ENCODE measurements at regions of chr7 and their contacts with region 1.

Region 1: GRCh38 chr7:123485187-123485586 is 49.2 kb downstream of the IQUB start:
- DNase-seq: no peak
- H3K4me3 ChIP-seq: no peak overlapping the region
- H3K27ac ChIP-seq: no peak overlapping the region
- H3K4me1 ChIP-seq: no peaks in the 10 kb centered on the region
- H3K27me3 ChIP-seq: no peaks in the 10 kb centered on the region
- CTCF ChIP-seq: no peak

Region 2: DNA sequence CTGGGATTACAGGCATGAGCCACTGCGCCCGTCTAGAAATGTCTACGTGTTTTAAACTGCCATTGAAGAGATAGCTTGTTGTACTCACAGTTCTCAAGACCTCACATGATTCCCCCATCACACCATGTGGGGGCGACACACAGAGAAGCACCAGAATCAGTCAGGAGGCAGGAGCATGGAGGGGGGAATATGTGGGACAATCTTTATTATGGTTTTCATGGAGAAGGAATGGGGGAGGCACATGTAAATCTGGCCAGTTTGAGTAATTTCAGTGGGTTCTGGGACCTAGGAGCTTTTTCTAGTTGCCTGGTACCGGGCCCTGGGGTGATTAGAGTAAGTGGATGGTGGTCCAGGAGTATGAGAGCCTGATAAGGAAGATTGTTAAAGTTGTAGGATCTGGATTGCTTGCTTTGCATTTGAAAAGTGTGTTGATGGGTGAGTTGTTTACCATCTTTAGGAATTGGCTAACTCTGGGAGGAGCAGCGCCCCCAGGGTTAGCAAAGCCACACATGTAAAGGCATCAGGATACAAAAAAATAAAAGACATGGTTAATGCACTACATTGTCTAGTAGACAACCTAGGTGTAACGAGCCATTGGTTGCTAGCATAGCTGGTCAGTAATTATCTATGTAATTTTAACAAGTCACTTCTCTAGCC is 200.0 kb before region 1 on chr7:
- intact Hi-C with region 1: no loop called
- DNase-seq: no peak
- H3K4me3 ChIP-seq: no peak overlapping the region
- H3K27ac ChIP-seq: no peak overlapping the region
- H3K4me1 ChIP-seq: no peaks in the 10 kb centered on the region
- H3K27me3 ChIP-seq: no peaks in the 10 kb centered on the region
- CTCF ChIP-seq: no peak

Region 3: GRCh38 chr7:124376111-124376510 is 890.9 kb after region 1 on chr7:
- intact Hi-C with region 1: loop called (anchors 5 kb)
- DNase-seq: no peak
- H3K4me3 ChIP-seq: no peak overlapping the region
- H3K27ac ChIP-seq: no peak overlapping the region
- H3K4me1 ChIP-seq: no peaks in the 10 kb centered on the region
- H3K27me3 ChIP-seq: no peaks in the 10 kb centered on the region
- CTCF ChIP-seq: no peak

Measured in tibial artery (tissue), 4 donors.